PC-3 (cell line): ENCODE measurements at regions of chr14 and their contacts with region 1.

Region 1: GRCh38 chr14:75709207-75709812 is 48.3 kb downstream of the TTLL5 start:
- DNase-seq: peak; percentile 80
- ATAC-seq: peak; percentile 26
- H3K4me3 ChIP-seq: no peak overlapping the region
- H3K27ac ChIP-seq: no peak overlapping the region
- H3K4me1 ChIP-seq: peaks cover 20% of the 10 kb centered on the region
- H3K27me3 ChIP-seq: no peaks in the 10 kb centered on the region
- CTCF ChIP-seq: peak; percentile 92

Region 2: DNA sequence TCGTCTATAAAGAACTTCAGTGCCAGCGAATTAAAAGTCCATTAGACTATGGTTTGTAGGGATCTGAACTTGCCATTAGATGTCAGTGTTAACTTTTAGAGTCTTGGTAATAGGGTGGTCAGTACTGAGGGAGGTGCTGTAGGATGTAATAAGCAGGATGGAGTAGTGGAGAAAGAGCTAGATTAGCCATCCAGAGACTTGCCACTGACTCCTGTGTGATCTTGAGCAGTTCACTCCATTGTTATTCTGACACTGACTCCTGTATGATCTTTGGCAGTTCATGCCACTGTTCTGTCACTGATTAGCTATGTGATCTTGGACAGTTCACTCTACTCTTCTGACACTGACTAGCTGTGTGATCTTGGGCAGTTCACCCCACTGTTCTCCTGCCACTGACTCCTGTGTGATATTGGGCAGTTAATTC is 85.3 kb after region 1 on chr14:
- CTCF ChIA-PET with region 1: interaction called, 52 read pairs
- POLR2A ChIA-PET with region 1: no interaction called
- intact Hi-C with region 1: loop called (anchors 1 kb)
- DNase-seq: peak; percentile 57
- ATAC-seq: peak; percentile 95
- H3K4me3 ChIP-seq: no peak overlapping the region
- H3K27ac ChIP-seq: no peak overlapping the region
- H3K4me1 ChIP-seq: no peaks in the 10 kb centered on the region
- H3K27me3 ChIP-seq: no peaks in the 10 kb centered on the region
- CTCF ChIP-seq: peak; percentile 70

Region 3: DNA sequence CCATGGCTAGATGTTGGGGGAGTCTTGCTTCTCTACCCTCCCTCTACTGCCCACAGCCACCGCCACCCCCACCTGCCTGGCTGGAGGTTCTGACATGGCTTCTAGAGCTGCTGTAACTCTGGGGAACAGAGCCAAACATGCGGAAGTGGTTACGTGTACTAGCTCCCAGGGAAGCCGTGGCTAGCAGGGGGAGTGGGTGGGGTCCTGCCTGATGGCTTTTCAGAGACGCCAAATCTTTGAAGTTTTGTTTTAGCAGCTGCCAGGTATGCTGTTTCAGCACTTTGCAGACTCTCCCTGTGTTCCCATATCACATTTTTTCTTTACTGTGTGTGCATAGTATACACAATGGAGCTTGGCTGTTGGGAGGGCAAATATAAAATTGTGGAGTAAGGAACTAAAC is 122.1 kb after region 1 on chr14:
- CTCF ChIA-PET with region 1: no interaction called
- POLR2A ChIA-PET with region 1: no interaction called
- intact Hi-C with region 1: loop called (anchors 1 kb)
- DNase-seq: peak; percentile 87
- ATAC-seq: peak; percentile 62
- H3K4me3 ChIP-seq: peak overlapping the region; percentile 63
- H3K27ac ChIP-seq: peak overlapping the region; percentile 99
- H3K4me1 ChIP-seq: peaks cover 56% of the 10 kb centered on the region
- H3K27me3 ChIP-seq: no peaks in the 10 kb centered on the region
- CTCF ChIP-seq: no peak

Region 4: GRCh38 chr14:75906676-75907280 is 197.5 kb after region 1 on chr14:
- CTCF ChIA-PET with region 1: interaction called, 4 read pairs
- POLR2A ChIA-PET with region 1: no interaction called
- intact Hi-C with region 1: loop called (anchors 10 kb)
- DNase-seq: peak; percentile 72
- ATAC-seq: no peak
- H3K4me3 ChIP-seq: no peak overlapping the region
- H3K27ac ChIP-seq: no peak overlapping the region
- H3K4me1 ChIP-seq: peaks cover 9% of the 10 kb centered on the region; the same call in 1 of the 2 replicates
- H3K27me3 ChIP-seq: no peaks in the 10 kb centered on the region
- CTCF ChIP-seq: peak; percentile 96

Region 5: GRCh38 chr14:75982266-75983018 is 273.1 kb after region 1 on chr14:
- CTCF ChIA-PET with region 1: interaction called, 34 read pairs
- POLR2A ChIA-PET with region 1: no interaction called
- intact Hi-C with region 1: loop called (anchors 1 kb)
- DNase-seq: peak; percentile 84
- ATAC-seq: peak; percentile 57
- H3K4me3 ChIP-seq: peak overlapping the region; percentile 96
- H3K27ac ChIP-seq: peak overlapping the region; percentile 85
- H3K4me1 ChIP-seq: peaks cover 43% of the 10 kb centered on the region
- H3K27me3 ChIP-seq: no peaks in the 10 kb centered on the region
- CTCF ChIP-seq: peak; percentile 51